Vagina (tissue), 2 donors: ENCODE measurements at regions of chr13 and their contacts with region 1.

Region 1: DNA sequence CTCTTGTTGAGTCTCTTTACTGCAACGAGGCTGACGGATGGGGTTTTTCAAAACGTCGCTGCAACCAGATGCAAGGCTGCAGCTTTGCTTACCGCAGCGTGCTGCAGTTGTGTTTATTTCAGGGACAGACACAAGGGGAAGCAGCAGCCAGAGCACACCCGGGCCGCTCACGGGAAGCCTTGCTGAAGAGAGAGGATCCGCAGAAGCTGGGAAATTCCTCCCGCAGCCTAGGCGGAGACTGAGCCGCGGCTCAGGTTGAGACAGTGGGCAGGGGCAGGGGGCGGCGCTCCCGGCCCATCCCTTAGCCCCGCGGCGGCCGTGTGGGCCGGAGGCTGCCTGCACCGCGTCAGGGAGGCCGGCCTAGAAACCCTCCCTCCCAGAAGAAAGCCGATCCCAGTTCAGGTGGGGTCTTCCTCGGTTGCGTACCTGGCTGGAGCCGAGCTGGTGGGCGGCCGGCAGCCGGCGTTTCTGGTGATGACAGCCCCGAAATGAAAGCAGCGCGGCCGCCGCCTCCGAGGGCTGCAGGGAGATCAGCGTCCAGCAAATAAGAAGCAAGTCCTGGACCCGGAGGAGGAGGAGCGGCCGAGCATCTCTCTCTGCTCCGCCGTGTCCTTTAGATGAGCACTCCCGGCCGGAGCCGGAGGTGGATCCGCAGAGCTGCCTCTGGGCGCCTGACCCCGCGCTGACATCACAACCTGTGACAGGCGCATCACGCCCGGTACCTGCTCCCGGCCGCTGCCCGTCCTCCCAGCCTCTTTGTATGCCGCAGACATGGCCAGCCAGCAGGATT is at the start of gene FRY:
- DNase-seq: peak in 1 of 2 donors; percentile 90
- H3K4me3 ChIP-seq: peak within 1 kb of the TSS; percentile 54 to 56
- H3K27ac ChIP-seq: peak within 1 kb of the TSS; percentile 82
- H3K4me1 ChIP-seq: peaks cover 19% of the 10 kb centered on the region
- H3K27me3 ChIP-seq: no peaks in the 10 kb centered on the region
- CTCF ChIP-seq: no peak
- POLR2A ChIP-seq: peak in 1 of 2 donors; percentile 41
- total RNA-seq, gene FRY: 11.0 TPM

Region 2: DNA sequence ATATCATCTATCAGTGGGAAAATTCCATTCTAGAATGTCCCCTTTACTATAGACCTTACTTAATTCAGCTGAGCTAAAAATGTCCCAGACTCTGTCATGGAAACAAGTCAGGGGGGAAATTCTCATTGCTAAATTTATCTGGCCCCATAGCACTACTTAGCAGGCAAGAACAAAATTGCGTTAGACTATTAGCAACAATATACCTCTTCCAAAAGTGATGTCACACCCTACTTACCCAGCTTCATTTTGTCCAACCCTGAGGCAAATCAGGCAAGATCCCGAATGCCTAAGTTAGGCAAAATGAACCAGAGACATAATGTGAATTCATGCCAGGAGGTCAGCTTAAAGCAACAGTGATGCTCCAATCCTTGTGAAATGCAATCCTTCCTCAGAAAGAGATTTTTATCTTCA is 94.0 kb after region 1 on chr13:
- intact Hi-C with region 1: loop called (anchors 2 kb)
- DNase-seq: peak in 1 of 2 donors; percentile 93
- H3K4me3 ChIP-seq: no peak overlapping the region
- H3K27ac ChIP-seq: peak overlapping the region; percentile 93
- H3K4me1 ChIP-seq: peaks cover 7% of the 10 kb centered on the region
- H3K27me3 ChIP-seq: no peaks in the 10 kb centered on the region
- CTCF ChIP-seq: no peak
- POLR2A ChIP-seq: no peak

Region 3: GRCh38 chr13:32310134-32310706 is 279.0 kb after region 1 on chr13:
- intact Hi-C with region 1: no loop called
- DNase-seq: no peak
- H3K4me3 ChIP-seq: peak overlapping the region; percentile 8 to 17
- H3K27ac ChIP-seq: peak overlapping the region; percentile 31
- H3K4me1 ChIP-seq: peaks cover 6% of the 10 kb centered on the region
- H3K27me3 ChIP-seq: no peaks in the 10 kb centered on the region
- CTCF ChIP-seq: peak; percentile 62 to 82 (median 70)
- POLR2A ChIP-seq: no peak

Region 4: GRCh38 chr13:32354040-32354439 is 322.8 kb after region 1 on chr13:
- intact Hi-C with region 1: no loop called
- DNase-seq: no peak
- H3K4me3 ChIP-seq: no peak overlapping the region
- H3K27ac ChIP-seq: no peak overlapping the region
- H3K4me1 ChIP-seq: no peaks in the 10 kb centered on the region
- H3K27me3 ChIP-seq: no peaks in the 10 kb centered on the region
- CTCF ChIP-seq: no peak
- POLR2A ChIP-seq: no peak

Region 5: GRCh38 chr13:32504263-32504927 is 473.2 kb after region 1 on chr13:
- intact Hi-C with region 1: no loop called
- DNase-seq: no peak
- H3K4me3 ChIP-seq: no peak overlapping the region
- H3K27ac ChIP-seq: no peak overlapping the region
- H3K4me1 ChIP-seq: no peaks in the 10 kb centered on the region
- H3K27me3 ChIP-seq: no peaks in the 10 kb centered on the region
- CTCF ChIP-seq: no peak
- POLR2A ChIP-seq: no peak